Breast epithelium (tissue), 4 donors: ENCODE measurements at regions of chr2 and their contacts with region 1.

Region 1: DNA sequence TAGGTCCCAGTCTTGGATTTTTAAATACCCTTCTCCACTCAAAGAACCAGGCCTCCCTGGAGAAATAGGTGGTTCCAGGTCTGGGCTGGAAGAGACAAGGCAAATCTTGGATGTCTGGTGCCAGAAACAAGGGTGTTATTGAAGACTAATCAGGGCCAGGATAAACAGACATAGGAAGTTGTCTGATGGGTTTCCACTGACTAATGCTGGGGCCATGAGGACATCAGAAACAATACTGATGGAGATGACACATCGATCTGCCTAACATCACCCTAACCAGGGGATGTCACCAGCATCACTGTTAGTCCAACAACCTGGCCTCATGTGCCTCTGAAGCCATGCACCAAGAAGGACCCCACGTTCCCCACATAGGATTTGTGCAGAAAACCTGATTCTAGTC is 42.5 kb upstream of the GLI2 start:
- DNase-seq: no peak
- H3K4me3 ChIP-seq: no peak overlapping the region
- H3K27ac ChIP-seq: no peak overlapping the region
- H3K4me1 ChIP-seq: no peaks in the 10 kb centered on the region
- H3K27me3 ChIP-seq: peaks cover 0 to 13% of the 10 kb centered on the region in 2 donors
- CTCF ChIP-seq: no peak
- POLR2A ChIP-seq: no peak

Region 2: GRCh38 chr2:121076885-121077549 is 383.9 kb after region 1 on chr2:
- intact Hi-C with region 1: loop called (anchors 5 kb)
- DNase-seq: peak; percentile 47 to 77
- H3K4me3 ChIP-seq: no peak overlapping the region
- H3K27ac ChIP-seq: no peak overlapping the region
- H3K4me1 ChIP-seq: no peaks in the 10 kb centered on the region
- H3K27me3 ChIP-seq: peaks cover 0 to 8% of the 10 kb centered on the region in 2 donors
- CTCF ChIP-seq: peak; percentile 51 to 73 (median 61)
- POLR2A ChIP-seq: no peak